ENCODE measurements at regions of chr10 and their contacts with region 1.

Region 1: GRCh38 chr10:28381903-28382347 is 79.1 kb upstream of the MPP7 start:
- DNase-seq: peak; percentile 93
- H3K4me3 Mint-ChIP-seq: no peak overlapping the region
- H3K27ac Mint-ChIP-seq: no peak overlapping the region
- H3K4me1 Mint-ChIP-seq: peaks cover 36% of the 10 kb centered on the region
- H3K27me3 Mint-ChIP-seq: no peaks in the 10 kb centered on the region

Region 2: GRCh38 chr10:27558612-27559020 is 823.3 kb before region 1 on chr10:
- CTCF ChIA-PET with region 1: no interaction called
- intact Hi-C with region 1: loop called (anchors 2 kb)
- DNase-seq: peak; percentile 60
- H3K4me3 Mint-ChIP-seq: no peak overlapping the region
- H3K27ac Mint-ChIP-seq: no peak overlapping the region
- H3K4me1 Mint-ChIP-seq: no peaks in the 10 kb centered on the region
- H3K27me3 Mint-ChIP-seq: no peaks in the 10 kb centered on the region

Region 3: GRCh38 chr10:27730043-27730442 is 651.9 kb before region 1 on chr10:
- CTCF ChIA-PET with region 1: no interaction called
- intact Hi-C with region 1: no loop called
- DNase-seq: no peak
- H3K4me3 Mint-ChIP-seq: no peak overlapping the region
- H3K27ac Mint-ChIP-seq: no peak overlapping the region
- H3K4me1 Mint-ChIP-seq: no peaks in the 10 kb centered on the region
- H3K27me3 Mint-ChIP-seq: peaks cover 15% of the 10 kb centered on the region

Region 4: DNA sequence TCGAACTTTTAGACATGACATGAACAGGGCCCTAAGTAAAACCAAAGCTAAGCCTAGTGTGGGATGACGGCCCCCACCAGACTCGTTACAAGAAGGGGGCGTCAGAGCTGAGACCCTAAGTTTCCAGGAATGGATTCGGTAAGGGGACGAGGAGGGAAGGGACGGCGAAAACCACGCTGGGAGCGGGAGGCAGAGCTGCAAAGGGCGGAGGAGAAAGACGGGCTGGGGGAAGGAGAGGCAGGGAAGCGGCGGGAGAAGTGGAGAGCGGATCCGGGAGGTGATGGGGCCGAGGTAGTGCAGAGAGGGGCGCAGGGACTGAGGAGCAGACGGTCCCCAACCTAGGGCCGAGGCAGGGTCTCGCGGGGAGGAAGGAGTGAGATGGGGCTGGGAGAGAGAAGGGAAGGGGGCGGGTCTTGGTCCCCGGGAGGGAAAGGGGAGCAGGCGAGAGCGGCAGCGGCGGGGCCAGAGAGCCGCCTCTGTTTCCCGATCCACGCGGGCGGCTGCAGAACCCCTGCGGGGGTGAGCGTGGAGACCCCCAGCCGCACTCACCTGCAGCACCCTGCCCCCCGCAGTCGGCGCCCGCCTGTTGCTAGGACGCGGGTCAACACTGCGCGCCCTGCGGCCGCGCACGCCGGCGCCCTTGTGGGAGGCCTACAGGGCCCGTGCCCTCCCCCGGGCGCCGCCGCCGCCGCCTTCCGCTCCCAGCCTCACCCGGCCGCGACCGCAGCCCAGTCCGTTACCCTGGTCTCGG is 383.5 kb before region 1 on chr10:
- CTCF ChIA-PET with region 1: no interaction called
- intact Hi-C with region 1: loop called (anchors 10 kb)
- DNase-seq: peak; percentile 21
- H3K4me3 Mint-ChIP-seq: peak overlapping the region; percentile 82
- H3K27ac Mint-ChIP-seq: no peak overlapping the region
- H3K4me1 Mint-ChIP-seq: peaks cover 10% of the 10 kb centered on the region
- H3K27me3 Mint-ChIP-seq: peaks cover 31% of the 10 kb centered on the region

Region 5: DNA sequence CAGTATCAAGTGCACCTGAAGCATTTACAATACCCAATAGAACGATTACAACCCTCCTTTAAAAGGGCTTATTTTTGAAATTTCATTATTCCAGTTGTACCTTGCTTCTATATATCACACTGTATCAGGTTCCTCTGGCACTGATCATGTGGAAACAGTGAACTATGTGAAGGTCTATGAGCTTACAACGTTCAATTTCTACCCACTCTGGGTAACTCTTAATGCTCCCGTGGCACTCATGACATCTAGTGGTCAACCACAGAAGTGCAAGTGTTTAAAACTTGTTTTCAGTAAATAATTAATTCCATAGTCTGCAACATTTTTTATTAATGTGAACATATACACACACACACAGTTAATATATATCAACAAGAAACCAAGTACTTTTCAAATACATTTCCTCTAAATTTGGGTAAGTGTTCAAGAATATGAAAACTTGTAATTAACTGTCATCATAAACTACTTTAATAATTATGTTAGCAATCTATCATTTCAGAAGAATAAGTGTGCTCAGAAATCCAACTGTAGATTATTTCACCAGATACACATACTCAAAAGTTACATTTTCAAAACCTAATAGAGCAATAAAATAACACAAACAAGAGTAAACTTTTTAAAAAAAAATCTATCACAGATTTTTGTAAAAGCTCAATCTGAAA is 140.1 kb before region 1 on chr10:
- CTCF ChIA-PET with region 1: interaction called, 177 read pairs
- intact Hi-C with region 1: loop called (anchors 2 kb)
- DNase-seq: peak; percentile 63
- H3K4me3 Mint-ChIP-seq: no peak overlapping the region
- H3K27ac Mint-ChIP-seq: no peak overlapping the region
- H3K4me1 Mint-ChIP-seq: peaks cover 36% of the 10 kb centered on the region
- H3K27me3 Mint-ChIP-seq: no peaks in the 10 kb centered on the region

Region 6: GRCh38 chr10:28302638-28303488 is 79.1 kb before region 1 on chr10 and contains the start of gene MPP7:
- CTCF ChIA-PET with region 1: interaction called, 129 read pairs
- intact Hi-C with region 1: loop called (anchors 1 kb)
- DNase-seq: peak; percentile 95
- H3K4me3 Mint-ChIP-seq: peak within 1 kb of the TSS; percentile 82
- H3K27ac Mint-ChIP-seq: peak within 1 kb of the TSS; percentile 77
- H3K4me1 Mint-ChIP-seq: peaks cover 53% of the 10 kb centered on the region
- H3K27me3 Mint-ChIP-seq: no peaks in the 10 kb centered on the region
- total RNA-seq, gene MPP7: 23.6 to 25.4 TPM

Region 7: DNA sequence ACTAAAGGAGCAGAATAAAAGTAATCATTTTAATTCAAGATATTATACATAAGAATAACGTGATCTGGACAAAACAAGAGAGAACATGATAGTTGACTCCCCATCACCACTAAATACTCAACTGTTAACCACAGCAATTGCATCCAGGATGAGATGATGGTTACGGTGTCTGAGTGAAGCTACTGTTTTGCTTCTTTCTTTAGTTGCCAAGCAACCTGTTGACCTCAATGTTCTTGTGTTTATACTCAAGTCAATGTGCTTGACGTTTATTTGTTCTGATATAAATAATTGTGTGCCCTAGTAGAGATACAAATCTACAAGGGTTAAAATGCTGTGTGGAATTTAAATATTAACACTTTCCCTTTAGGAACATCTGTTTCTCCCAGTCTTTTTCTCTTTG is 47.6 kb before region 1 on chr10:
- CTCF ChIA-PET with region 1: interaction called, 59 read pairs
- intact Hi-C with region 1: loop called (anchors 1 kb)
- DNase-seq: peak; percentile 61
- H3K4me3 Mint-ChIP-seq: peak overlapping the region; percentile 67
- H3K27ac Mint-ChIP-seq: peak overlapping the region; percentile 96
- H3K4me1 Mint-ChIP-seq: peaks cover 76% of the 10 kb centered on the region
- H3K27me3 Mint-ChIP-seq: no peaks in the 10 kb centered on the region

Region 8: DNA sequence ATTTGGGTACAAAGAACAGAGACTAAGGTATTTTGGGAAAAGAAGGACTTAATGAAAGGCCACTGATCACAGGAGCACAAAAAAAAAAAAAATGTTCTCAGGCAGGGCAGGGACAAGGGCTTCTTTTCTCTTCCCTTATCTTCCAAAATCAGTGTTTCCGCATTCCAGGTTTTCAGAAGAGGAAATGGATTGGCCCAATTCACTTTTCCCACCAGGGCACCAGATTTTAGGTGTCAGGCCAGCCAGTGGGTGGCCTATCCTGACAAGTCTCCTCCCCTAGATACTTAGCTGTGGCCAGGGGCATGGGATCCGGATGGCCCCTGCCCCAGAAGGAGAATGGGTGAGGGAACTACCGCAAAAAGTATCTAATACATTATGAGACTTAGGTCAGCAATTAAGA is 62.1 kb after region 1 on chr10:
- CTCF ChIA-PET with region 1: no interaction called
- intact Hi-C with region 1: no loop called
- DNase-seq: no peak
- H3K4me3 Mint-ChIP-seq: no peak overlapping the region
- H3K27ac Mint-ChIP-seq: no peak overlapping the region
- H3K4me1 Mint-ChIP-seq: no peaks in the 10 kb centered on the region
- H3K27me3 Mint-ChIP-seq: peaks cover 6% of the 10 kb centered on the region

Region 9: DNA sequence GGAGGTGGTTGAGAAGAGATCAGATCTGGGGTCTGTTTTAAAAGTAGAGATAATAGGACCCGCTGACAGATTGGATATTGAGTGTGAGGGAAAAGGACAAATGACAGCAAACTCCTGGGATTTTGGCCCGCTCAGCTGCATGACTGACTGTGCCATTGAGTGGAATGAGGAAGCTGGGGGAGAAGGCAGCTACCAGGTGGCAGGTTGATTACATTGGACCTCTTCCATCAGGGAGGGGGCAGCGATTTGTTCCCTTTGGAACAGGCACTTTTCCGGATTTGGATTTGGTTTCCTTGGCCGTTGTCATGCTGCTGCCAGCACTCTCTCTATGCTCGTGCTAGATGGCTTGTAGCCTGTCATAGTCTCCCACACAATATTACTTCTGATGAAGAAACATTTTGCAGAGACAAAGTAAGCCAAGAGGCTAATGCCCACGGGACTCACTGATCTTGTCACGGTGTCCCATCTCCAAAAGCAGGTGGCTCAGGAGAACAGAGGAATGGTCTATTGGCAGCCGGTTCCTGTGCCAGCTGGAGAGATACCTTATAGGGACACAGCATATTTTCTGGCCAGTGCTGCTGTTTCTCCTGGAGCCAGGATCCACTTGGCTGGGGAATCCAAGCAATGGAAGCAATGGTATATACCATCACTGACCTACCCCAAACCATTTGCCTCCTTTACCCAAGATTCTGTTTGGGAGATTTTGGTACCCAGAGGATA is 81.9 kb after region 1 on chr10:
- CTCF ChIA-PET with region 1: no interaction called
- intact Hi-C with region 1: no loop called
- DNase-seq: no peak
- H3K4me3 Mint-ChIP-seq: no peak overlapping the region
- H3K27ac Mint-ChIP-seq: no peak overlapping the region
- H3K4me1 Mint-ChIP-seq: no peaks in the 10 kb centered on the region
- H3K27me3 Mint-ChIP-seq: no peaks in the 10 kb centered on the region

Region 10: DNA sequence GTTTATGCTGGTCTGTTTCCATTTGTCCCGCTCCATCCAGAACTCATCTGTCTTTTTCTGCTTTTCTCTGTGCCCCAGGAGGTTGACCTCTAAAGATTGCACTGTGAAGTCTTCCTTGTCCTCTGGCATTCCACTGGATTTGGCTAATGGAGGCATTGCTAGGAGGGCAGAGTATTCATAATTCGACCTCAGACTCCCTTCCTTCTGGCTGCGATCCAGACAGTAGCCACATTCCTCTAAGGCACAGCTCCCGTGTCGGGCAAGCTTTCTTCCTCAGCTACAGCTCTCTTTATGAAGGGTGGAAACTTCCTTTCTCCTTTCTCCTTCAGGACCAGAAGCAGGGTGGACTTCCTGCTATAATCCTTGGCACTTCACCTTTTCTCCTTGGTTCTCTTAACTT is 471.3 kb after region 1 on chr10:
- CTCF ChIA-PET with region 1: no interaction called
- intact Hi-C with region 1: no loop called
- DNase-seq: no peak
- H3K4me3 Mint-ChIP-seq: no peak overlapping the region
- H3K27ac Mint-ChIP-seq: no peak overlapping the region
- H3K4me1 Mint-ChIP-seq: no peaks in the 10 kb centered on the region
- H3K27me3 Mint-ChIP-seq: peaks cover 7% of the 10 kb centered on the region

Measured in activated naive CD4-positive, alpha-beta T cell treated with anti-CD3 and anti-CD28 coated beads for 36 hours (primary cell).